ENCODE measurements at regions of chr2 and their contacts with region 1.

Region 1: DNA sequence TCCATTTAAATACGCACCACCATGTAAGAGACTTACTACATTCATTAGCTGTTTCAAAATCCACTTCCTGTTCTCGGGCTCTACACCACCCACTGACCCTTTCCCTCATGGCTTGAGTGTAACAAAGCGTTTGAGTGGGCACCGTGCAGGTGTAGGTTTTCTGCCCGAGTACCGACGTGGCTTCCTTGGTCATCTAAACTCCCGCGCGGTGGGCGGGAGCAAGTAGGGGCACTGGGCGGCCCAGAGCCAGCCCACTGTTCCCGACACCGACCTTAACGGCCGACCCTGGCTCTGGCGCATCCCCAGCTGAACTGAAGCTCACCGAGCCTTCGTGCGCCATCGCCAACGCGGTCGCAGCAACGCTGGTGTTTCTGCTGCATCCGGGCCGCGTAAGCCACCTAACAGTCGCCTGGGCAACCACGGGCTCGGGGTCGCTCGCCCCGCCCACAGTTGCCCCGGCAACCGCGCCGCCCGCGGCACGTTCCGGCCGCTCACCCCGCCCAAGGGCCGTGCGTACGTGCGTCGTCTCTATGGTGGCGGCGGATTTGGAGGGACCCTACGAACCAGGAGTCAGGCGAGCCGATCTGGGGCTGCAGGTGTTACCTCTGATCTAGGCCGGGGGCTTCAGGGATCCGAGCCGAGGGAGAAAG is at the starts of genes C2orf81 and WDR54:
- DNase-seq: peak; percentile 90 to 97 (median 96)
- ATAC-seq: peak; percentile 85 to 87
- H3K4me3 Mint-ChIP-seq: peak within 1 kb of the TSS; percentile 96 to 100 (median 99)
- H3K27ac Mint-ChIP-seq: peak within 1 kb of the TSS; percentile 96 to 100 (median 99)
- H3K4me1 Mint-ChIP-seq: peaks cover 18 to 40% (median 28%) of the 10 kb centered on the region in 4 donors
- H3K27me3 Mint-ChIP-seq: no peaks in the 10 kb centered on the region
- polyA plus RNA-seq, gene C2orf81: 3.2 to 5.3 (median 3.3) TPM
- polyA plus RNA-seq, gene WDR54: 43.9 to 65.1 (median 61.7) TPM

Region 2: GRCh38 chr2:74391580-74392448 is 29.5 kb before region 1 on chr2:
- POLR2A ChIA-PET with region 1: interaction called, 20 read pairs
- DNase-seq: peak; percentile 86 to 99 (median 96)
- ATAC-seq: peak; percentile 85 to 92
- H3K4me3 Mint-ChIP-seq: peak overlapping the region in 3 of 10 donors; percentile 94 to 99 (median 99)
- H3K27ac Mint-ChIP-seq: peak overlapping the region in 9 of 10 donors; percentile 99 to 100 (median 100)
- H3K4me1 Mint-ChIP-seq: peaks cover 4 to 9% (median 5%) of the 10 kb centered on the region in 4 donors
- H3K27me3 Mint-ChIP-seq: peaks cover 0 to 5% (median 1%) of the 10 kb centered on the region in 5 donors

Region 3: GRCh38 chr2:74472086-74472944 is 51.0 kb after region 1 on chr2 and contains the start of gene MRPL53:
- POLR2A ChIA-PET with region 1: interaction called, 12 read pairs
- DNase-seq: peak; percentile 93 to 98 (median 96)
- ATAC-seq: peak; percentile 93 to 94
- H3K4me3 Mint-ChIP-seq: peak within 1 kb of the TSS; percentile 94 to 99 (median 98)
- H3K27ac Mint-ChIP-seq: peak within 1 kb of the TSS; percentile 98 to 100 (median 99)
- H3K4me1 Mint-ChIP-seq: peaks cover 16 to 37% (median 27%) of the 10 kb centered on the region in 4 donors
- H3K27me3 Mint-ChIP-seq: no peaks in the 10 kb centered on the region
- polyA plus RNA-seq, gene MRPL53: 148 to 171 (median 154) TPM